ENCODE measurements at regions of chr9 and their contacts with region 1.

Region 1: GRCh38 chr9:38208206-38208901 is 139.3 kb upstream of the SHB start:
- DNase-seq: no peak
- H3K4me3 ChIP-seq: no peak overlapping the region
- H3K27ac ChIP-seq: no peak overlapping the region
- H3K4me1 ChIP-seq: no peaks in the 10 kb centered on the region
- H3K27me3 ChIP-seq: no peaks in the 10 kb centered on the region
- CTCF ChIP-seq: no peak
- EP300 ChIP-seq: no peak
- POLR2A ChIP-seq: no peak

Region 2: DNA sequence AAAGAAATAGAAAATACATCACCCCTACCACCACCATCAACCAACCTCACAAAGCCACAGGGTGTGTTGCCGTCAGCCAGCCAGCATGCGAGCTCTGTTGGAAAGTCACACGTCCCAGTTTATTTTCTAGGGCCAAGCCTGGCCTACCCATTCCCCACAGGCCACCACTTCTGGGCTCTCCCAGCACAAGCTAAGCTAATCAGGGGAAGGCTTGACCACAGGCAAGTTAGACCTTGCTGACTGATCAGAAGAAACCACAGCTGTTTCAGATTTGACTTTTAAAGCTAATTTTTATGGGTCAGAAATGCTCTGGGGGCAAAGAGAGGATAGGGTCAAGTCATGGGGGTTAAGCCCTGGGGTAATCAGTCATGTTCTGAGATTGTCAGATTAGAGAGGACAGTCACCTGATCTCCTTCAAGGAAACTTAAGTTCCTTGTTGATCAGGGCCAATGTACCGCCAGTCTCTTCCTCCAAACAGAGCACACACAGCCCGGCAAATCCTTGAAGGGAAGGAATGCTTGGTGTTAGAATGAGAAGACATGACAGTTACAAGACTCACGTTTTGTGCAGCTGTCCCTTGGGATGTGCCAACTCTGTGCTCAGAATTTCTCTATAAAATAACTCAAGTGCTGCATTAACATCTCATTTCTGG is 146.9 kb before region 1 on chr9:
- in situ Hi-C with region 1: no loop called
- intact Hi-C with region 1: no loop called
- DNase-seq: no peak
- H3K4me3 ChIP-seq: no peak overlapping the region
- H3K27ac ChIP-seq: peak overlapping the region in 3 of 4 donors; percentile 16 to 44 (median 38)
- H3K4me1 ChIP-seq: peaks cover 11 to 58% (median 40%) of the 10 kb centered on the region in 4 donors
- H3K27me3 ChIP-seq: no peaks in the 10 kb centered on the region
- CTCF ChIP-seq: no peak
- EP300 ChIP-seq: no peak
- POLR2A ChIP-seq: no peak

Region 3: DNA sequence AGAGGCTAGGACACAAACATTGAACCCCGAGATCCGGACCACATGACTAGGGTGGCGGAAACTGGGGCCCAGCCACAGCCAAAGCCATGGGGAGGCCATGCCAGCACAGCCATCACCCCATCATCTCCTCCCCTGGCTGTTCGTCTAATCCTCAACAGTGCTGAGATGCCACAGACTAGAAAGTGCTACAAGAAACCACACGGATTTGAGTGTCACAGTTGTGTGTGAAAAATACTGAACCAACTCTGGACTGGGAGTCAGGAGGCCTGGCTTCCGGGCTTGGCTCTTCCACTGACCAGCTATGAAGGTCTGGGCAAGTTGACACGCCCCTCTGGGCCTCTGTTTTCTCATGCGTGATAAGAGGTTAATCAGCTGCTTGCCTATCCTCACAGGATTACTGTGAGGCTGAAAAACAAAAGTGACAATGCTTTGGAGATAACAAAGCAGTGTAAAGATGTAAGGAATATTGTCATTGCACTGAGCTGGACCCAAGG is 100.5 kb before region 1 on chr9:
- in situ Hi-C with region 1: loop called in 1 of 4 experiments (anchors 25 kb)
- intact Hi-C with region 1: no loop called
- DNase-seq: no peak
- H3K4me3 ChIP-seq: no peak overlapping the region
- H3K27ac ChIP-seq: no peak overlapping the region
- H3K4me1 ChIP-seq: no peaks in the 10 kb centered on the region
- H3K27me3 ChIP-seq: no peaks in the 10 kb centered on the region
- CTCF ChIP-seq: no peak
- EP300 ChIP-seq: no peak
- POLR2A ChIP-seq: no peak

Measured in transverse colon (tissue), 4 donors.